Esophagus squamous epithelium (tissue), 5 donors: ENCODE measurements at regions of chr22 and their contacts with region 1.

Region 1: GRCh38 chr22:45091254-45091854 is 72.4 kb upstream of the NUP50 start:
- DNase-seq: no peak
- H3K4me3 ChIP-seq: no peak overlapping the region
- H3K27ac ChIP-seq: no peak overlapping the region
- H3K4me1 ChIP-seq: peaks cover 0 to 4% (median 0%) of the 10 kb centered on the region in 3 donors
- H3K27me3 ChIP-seq: peaks cover 0 to 68% (median 2%) of the 10 kb centered on the region in 4 donors
- CTCF ChIP-seq: no peak
- POLR2A ChIP-seq: no peak

Region 2: GRCh38 chr22:44828193-44828592 is 263.2 kb before region 1 on chr22:
- intact Hi-C with region 1: loop called (anchors 5 kb)
- DNase-seq: no peak
- H3K4me3 ChIP-seq: no peak overlapping the region
- H3K27ac ChIP-seq: no peak overlapping the region
- H3K4me1 ChIP-seq: no peaks in the 10 kb centered on the region
- H3K27me3 ChIP-seq: no peaks in the 10 kb centered on the region
- CTCF ChIP-seq: peak in 2 of 6 experiments; percentile 5 to 41
- POLR2A ChIP-seq: no peak